Right cardiac atrium (tissue), 5 donors: ENCODE measurements at regions of chr2 and their contacts with region 1.

Region 1: DNA sequence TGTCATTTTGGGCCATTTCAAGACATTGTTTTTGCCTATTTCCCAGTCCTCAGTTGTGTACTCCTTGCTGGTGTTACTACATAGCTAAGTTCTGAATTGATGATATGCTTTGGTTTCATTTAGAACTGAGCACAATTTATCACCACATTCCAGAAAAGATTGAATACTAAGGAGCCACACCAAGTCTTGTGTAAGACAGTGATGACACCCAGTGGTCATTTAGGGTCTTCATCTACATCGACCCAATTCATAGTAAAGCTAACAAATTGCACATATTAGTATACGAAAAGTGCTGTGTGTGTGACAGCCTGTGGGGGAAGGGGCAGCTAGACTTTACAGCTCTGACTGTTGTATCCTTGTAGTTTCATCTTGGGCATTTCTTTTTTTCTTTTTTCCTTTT is 10.9 kb upstream of the DLX2 start:
- DNase-seq: no peak
- ATAC-seq: peak; percentile 37 to 51
- H3K4me3 ChIP-seq: no peak overlapping the region
- H3K27ac ChIP-seq: no peak overlapping the region
- H3K4me1 ChIP-seq: no peaks in the 10 kb centered on the region
- H3K27me3 ChIP-seq: no peaks in the 10 kb centered on the region

Region 2: DNA sequence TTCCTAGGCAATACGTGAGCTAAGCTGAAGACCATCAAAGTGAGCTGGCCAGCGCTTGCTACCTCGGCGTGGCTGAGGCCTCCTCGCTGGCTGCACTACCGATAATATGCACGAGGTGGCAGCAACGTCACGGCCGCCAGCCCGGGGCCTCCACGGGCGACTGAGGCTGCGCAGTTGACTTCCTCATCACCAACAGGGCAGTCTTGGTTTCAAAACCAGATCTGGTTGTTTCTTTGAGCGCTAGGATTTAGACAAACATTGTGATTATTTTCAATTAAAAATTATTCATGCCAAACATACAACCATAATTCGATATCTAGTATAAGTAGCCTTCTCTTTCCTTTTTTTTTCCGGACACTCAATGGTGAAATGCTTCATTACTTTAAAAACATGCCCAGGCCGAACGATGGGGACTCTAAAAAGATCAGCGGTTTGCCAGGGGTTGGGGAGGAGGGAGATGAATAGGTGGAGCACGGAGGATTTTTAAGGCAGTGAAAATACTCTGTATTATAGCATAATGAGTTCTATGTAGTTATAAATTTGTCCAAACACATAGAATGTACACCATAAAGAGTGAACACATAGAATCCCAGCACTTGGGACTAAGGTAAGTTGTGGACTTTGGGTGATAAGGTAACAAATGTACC is 539.3 kb before region 1 on chr2:
- intact Hi-C with region 1: loop called in 1 of 4 experiments (anchors 10 kb)
- DNase-seq: peak; percentile 81 to 93 (median 92)
- ATAC-seq: peak; percentile 93 to 97
- H3K4me3 ChIP-seq: no peak overlapping the region
- H3K27ac ChIP-seq: no peak overlapping the region
- H3K4me1 ChIP-seq: no peaks in the 10 kb centered on the region
- H3K27me3 ChIP-seq: no peaks in the 10 kb centered on the region

Region 3: GRCh38 chr2:171703574-171704347 is 409.9 kb before region 1 on chr2:
- intact Hi-C with region 1: loop called (anchors 10 kb)
- DNase-seq: no peak
- ATAC-seq: peak in 1 of 2 donors; percentile 40
- H3K4me3 ChIP-seq: no peak overlapping the region
- H3K27ac ChIP-seq: no peak overlapping the region
- H3K4me1 ChIP-seq: no peaks in the 10 kb centered on the region
- H3K27me3 ChIP-seq: no peaks in the 10 kb centered on the region

Region 4: GRCh38 chr2:172226244-172227061 is 112.8 kb after region 1 on chr2:
- intact Hi-C with region 1: no loop called
- DNase-seq: peak in 1 of 3 donors; percentile 66
- ATAC-seq: peak; percentile 25 to 48
- H3K4me3 ChIP-seq: no peak overlapping the region
- H3K27ac ChIP-seq: no peak overlapping the region
- H3K4me1 ChIP-seq: no peaks in the 10 kb centered on the region
- H3K27me3 ChIP-seq: no peaks in the 10 kb centered on the region

Region 5: DNA sequence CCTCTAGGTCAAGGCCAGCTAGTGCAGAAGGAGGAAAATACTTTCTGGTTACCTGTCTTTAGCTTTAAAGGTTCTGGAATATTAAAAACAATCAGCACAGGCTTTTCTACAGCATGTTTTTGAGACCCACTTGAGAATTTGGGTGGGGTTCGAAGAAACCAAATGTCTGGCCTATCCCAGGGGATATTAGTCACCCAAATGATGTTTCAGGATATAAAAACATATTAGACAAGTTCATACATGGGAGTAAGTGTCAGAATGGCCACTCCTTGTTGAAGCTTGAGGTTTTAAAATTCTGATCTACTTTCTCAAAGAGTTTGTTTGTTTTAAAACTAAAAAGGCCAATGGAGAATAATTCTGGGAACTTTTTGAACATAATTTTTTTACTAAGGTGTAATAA is 147.7 kb after region 1 on chr2:
- intact Hi-C with region 1: no loop called
- DNase-seq: no peak
- ATAC-seq: no peak
- H3K4me3 ChIP-seq: no peak overlapping the region
- H3K27ac ChIP-seq: no peak overlapping the region
- H3K4me1 ChIP-seq: no peaks in the 10 kb centered on the region
- H3K27me3 ChIP-seq: no peaks in the 10 kb centered on the region